Panc1 (cell line): ENCODE measurements at regions of chr20 and their contacts with region 1.

Region 1: DNA sequence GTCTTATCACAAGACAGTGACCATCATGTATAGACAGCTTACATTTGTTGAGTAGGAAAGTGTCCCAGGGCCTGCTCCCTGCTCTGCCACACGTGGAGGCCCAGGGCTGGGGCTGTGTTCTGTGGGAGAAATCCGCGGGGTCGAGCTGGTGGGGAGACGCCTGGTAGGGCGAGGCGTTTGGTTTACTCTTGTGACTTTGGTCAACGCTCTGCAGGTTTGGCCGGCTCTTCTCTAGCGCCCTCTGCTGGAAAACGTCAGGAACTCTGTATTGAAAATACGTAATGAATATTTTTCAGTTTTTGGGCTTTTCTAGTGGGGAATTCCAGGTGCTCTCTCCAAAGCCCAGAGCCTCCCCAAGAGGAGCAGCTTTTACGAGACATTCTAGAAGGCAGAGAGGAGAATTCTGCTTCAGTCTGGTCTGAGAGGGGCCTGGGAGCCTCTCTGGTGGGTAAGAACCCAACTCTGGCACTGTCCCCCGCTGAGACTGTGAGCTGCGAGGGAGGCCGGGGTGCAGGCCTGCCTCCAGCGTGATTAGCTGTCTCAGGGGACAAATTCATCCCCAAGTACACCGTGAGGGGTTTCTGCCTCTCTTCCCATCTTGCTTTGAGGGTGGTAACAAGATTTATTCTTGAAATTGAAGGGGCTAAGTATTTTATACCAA is 112.6 kb upstream of the RALGAPA2 start:
- DNase-seq: no peak
- ATAC-seq: peak; percentile 68
- H3K4me3 ChIP-seq: no peak overlapping the region
- H3K27ac ChIP-seq: no peak overlapping the region
- H3K4me1 ChIP-seq: no peaks in the 10 kb centered on the region
- H3K27me3 ChIP-seq: peaks cover 5% of the 10 kb centered on the region; the same call in 1 of the 2 replicates
- CTCF ChIP-seq: peak; percentile 91

Region 2: DNA sequence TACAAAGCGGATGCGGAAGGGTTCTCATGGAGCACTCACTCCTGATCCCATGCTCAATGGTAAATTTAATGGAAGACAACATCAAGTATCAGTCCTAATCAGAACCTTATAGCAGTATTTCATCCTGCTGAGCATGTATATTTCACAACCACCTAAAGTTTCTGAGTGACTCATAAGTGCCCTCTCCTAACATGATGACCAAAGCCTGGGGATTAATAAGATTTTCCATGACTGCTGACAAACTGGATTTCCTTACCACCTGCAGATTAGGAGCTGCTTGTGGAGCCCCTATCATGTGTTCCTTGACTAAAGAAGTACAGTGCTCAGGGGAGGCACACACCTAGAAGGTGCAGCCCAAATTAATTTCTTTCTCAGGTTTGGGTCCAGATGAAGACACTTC is 344.4 kb before region 1 on chr20:
- CTCF ChIA-PET with region 1: no interaction called
- POLR2A ChIA-PET with region 1: no interaction called
- in situ Hi-C with region 1: no loop called
- intact Hi-C with region 1: no loop called
- DNase-seq: no peak
- ATAC-seq: no peak
- H3K4me3 ChIP-seq: no peak overlapping the region
- H3K27ac ChIP-seq: no peak overlapping the region
- H3K4me1 ChIP-seq: no peaks in the 10 kb centered on the region
- H3K27me3 ChIP-seq: no peaks in the 10 kb centered on the region
- CTCF ChIP-seq: no peak

Region 3: DNA sequence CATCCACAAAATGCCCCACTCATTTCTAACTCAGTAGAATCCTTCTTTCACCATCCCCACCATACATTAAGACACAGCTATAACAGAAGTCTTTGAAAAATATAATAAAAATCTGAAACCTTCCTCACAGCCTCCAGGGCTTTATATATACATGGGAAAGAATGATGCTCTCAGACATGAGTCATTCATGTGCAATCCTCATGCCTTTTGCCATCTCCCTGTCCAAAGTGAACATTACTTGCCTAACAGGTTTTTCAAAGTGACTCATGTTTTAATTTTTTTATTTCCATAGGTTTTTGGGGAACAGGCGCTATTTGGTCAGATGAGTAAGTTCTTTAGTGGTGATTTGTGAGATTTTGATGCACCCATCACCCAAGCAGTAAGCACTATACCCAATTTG is 275.3 kb before region 1 on chr20:
- CTCF ChIA-PET with region 1: no interaction called
- POLR2A ChIA-PET with region 1: no interaction called
- in situ Hi-C with region 1: no loop called
- intact Hi-C with region 1: no loop called
- DNase-seq: no peak
- ATAC-seq: no peak
- H3K4me3 ChIP-seq: no peak overlapping the region
- H3K27ac ChIP-seq: no peak overlapping the region
- H3K4me1 ChIP-seq: no peaks in the 10 kb centered on the region
- H3K27me3 ChIP-seq: no peaks in the 10 kb centered on the region
- CTCF ChIP-seq: no peak

Region 4: DNA sequence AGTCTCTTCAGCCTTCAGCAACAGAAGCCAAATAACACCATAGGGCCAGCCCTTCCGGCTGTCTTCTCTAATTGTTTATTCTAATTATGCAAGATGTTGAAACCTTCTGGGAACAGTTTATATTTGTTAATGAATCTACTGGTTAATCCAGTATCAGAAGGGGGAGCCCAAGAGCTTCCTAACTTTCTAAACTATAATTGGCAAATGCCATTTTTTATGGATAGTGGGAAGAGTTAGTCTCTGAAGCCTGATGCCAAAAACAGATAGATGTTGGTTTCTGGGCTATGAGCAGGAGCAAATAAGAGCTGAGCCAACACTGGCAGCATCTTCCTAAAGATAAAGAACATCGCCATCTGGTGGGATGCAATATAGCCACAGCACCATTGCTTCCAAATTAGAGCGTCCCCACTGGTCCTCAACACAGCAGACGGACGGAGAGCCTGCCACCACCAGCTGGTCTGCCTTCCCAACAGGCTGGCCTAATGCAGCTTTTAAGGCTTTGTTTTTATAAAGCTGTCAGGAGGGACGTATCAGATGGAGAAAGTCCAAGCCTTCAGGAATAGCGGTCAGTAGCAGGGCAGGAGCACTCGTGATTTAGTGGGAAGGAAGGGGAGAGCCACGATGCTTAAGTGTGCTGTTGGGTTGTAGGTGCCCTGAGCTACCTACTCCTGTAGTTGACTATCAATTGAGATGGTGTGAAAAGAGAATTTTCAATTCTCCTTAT is 231.4 kb before region 1 on chr20:
- CTCF ChIA-PET with region 1: interaction called, 5 read pairs
- POLR2A ChIA-PET with region 1: no interaction called
- in situ Hi-C with region 1: no loop called
- intact Hi-C with region 1: loop called (anchors 10 kb)
- DNase-seq: peak; percentile 17
- ATAC-seq: peak; percentile 87
- H3K4me3 ChIP-seq: no peak overlapping the region
- H3K27ac ChIP-seq: no peak overlapping the region
- H3K4me1 ChIP-seq: no peaks in the 10 kb centered on the region
- H3K27me3 ChIP-seq: no peaks in the 10 kb centered on the region
- CTCF ChIP-seq: peak; percentile 85

Region 5: DNA sequence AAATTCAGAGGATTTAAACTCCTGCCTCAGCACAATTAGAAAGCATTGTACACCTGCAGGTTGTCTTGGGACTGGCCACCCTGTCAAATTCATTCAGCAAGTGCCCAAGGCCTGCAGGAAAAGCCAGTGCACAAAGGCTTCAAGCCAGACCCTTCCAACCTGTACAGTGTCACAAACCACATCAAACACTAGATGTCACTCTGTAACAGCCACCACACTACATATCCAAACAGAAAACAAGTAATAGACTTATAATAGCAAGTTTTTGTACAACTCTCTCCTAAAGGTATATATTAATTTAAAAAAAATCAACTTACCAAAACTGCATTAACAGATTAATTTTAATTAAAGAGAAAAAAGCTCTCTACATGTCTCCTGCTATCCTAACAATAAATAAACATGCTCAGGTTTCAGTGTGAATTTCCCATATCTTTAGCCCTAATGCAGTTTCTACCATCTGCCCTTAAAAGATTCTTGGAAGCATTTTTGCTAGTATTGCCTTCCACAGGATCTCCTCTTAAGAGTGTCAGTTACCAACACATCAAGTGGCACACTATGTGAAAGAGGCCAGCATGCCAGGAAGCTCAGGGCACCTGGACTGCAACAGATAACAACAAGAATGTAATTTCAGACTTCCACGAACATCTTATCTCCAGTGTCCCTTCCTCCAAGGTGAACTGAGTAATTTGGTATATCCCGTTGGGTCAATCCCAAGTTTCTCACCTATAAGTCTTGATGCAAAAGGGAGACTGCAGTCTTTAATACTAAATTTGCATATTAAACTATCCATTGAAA is 160.1 kb before region 1 on chr20:
- CTCF ChIA-PET with region 1: no interaction called
- POLR2A ChIA-PET with region 1: no interaction called
- in situ Hi-C with region 1: no loop called
- intact Hi-C with region 1: loop called (anchors 1 kb)
- DNase-seq: peak; percentile 33
- ATAC-seq: peak; percentile 90
- H3K4me3 ChIP-seq: no peak overlapping the region
- H3K27ac ChIP-seq: no peak overlapping the region
- H3K4me1 ChIP-seq: no peaks in the 10 kb centered on the region
- H3K27me3 ChIP-seq: no peaks in the 10 kb centered on the region
- CTCF ChIP-seq: peak; percentile 75

Region 6: GRCh38 chr20:20956513-20956931 is 131.5 kb after region 1 on chr20:
- CTCF ChIA-PET with region 1: no interaction called
- POLR2A ChIA-PET with region 1: no interaction called
- in situ Hi-C with region 1: no loop called
- intact Hi-C with region 1: no loop called
- DNase-seq: no peak
- ATAC-seq: no peak
- H3K4me3 ChIP-seq: no peak overlapping the region
- H3K27ac ChIP-seq: no peak overlapping the region
- H3K4me1 ChIP-seq: no peaks in the 10 kb centered on the region
- H3K27me3 ChIP-seq: no peaks in the 10 kb centered on the region
- CTCF ChIP-seq: no peak